Activated naive CD4-positive, alpha-beta T cell treated with anti-CD3 and anti-CD28 coated beads for 36 hours (primary cell): ENCODE measurements at regions of chr14 and their contacts with region 1.

Region 1: DNA sequence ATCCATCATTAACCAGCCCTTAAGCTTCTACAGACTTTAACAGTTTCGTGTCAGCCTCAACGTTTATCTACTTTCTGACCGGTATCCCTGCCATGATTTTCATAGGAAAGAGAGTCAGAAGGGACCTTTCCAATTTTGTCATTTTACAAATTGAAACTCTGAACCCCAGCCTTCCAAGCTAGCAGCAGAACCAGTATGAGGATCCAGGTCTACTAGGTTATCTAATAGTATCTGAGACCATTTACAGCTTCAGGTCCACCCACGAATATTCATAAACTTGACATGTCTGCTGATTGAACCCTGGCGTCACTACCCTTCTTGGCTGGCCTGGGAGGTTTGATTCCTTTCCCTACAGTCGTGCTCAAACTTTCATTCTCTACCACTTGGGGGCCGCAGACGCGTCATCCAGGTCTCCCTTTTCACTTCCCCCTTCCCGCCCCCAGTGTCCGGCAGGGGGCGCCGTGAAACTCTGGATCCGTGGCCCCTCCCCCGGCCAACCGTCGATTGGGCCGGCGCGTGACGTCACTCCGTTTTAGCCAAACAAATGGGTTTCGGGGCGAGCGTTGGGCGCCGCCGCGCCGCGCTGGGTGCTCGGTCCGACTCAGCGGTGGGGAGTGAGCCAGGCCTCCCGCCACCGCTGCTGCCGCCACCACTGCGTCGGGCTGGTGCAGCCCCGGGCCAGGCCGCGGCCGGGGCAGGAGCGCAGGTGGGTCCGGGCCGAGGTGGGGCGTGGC is at the start of gene FBXO34:
- DNase-seq: peak; percentile 99
- H3K4me3 Mint-ChIP-seq: peak within 1 kb of the TSS; percentile 86
- H3K27ac Mint-ChIP-seq: peak within 1 kb of the TSS; percentile 88
- H3K4me1 Mint-ChIP-seq: peaks cover 43% of the 10 kb centered on the region
- H3K27me3 Mint-ChIP-seq: no peaks in the 10 kb centered on the region
- total RNA-seq, gene FBXO34: 17.4 to 17.7 TPM

Region 2: GRCh38 chr14:54737132-54737711 is 533.8 kb before region 1 on chr14:
- CTCF ChIA-PET with region 1: no interaction called
- intact Hi-C with region 1: no loop called
- DNase-seq: peak; percentile 36
- H3K4me3 Mint-ChIP-seq: no peak overlapping the region
- H3K27ac Mint-ChIP-seq: no peak overlapping the region
- H3K4me1 Mint-ChIP-seq: peaks cover 31% of the 10 kb centered on the region
- H3K27me3 Mint-ChIP-seq: no peaks in the 10 kb centered on the region

Region 3: GRCh38 chr14:54881235-54881760 is 389.7 kb before region 1 on chr14:
- CTCF ChIA-PET with region 1: no interaction called
- intact Hi-C with region 1: loop called (anchors 5 kb)
- DNase-seq: peak; percentile 38
- H3K4me3 Mint-ChIP-seq: peak overlapping the region; percentile 78
- H3K27ac Mint-ChIP-seq: peak overlapping the region; percentile 96
- H3K4me1 Mint-ChIP-seq: peaks cover 34% of the 10 kb centered on the region
- H3K27me3 Mint-ChIP-seq: no peaks in the 10 kb centered on the region

Region 4: DNA sequence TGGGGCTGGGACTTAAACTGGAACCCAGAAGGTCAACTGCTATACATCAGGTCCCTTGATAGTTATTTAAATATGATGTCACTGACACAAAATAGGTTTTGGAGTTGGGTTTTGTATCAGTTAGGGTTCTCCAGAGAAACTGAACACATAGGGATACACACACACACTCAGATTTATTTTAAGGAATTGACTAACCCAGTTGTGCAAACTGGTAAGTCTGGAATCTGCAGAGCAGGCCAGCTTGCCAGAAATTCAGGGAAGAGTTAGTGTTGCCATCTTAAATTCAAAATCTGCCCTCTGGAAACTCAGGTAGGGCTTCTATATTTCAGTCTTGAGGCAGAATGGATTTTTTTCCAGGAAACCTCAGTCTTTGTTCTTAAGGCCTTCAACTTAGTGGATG is 182.6 kb before region 1 on chr14:
- CTCF ChIA-PET with region 1: no interaction called
- intact Hi-C with region 1: loop called (anchors 2 kb)
- DNase-seq: no peak
- H3K4me3 Mint-ChIP-seq: no peak overlapping the region
- H3K27ac Mint-ChIP-seq: no peak overlapping the region
- H3K4me1 Mint-ChIP-seq: no peaks in the 10 kb centered on the region
- H3K27me3 Mint-ChIP-seq: no peaks in the 10 kb centered on the region

Region 5: DNA sequence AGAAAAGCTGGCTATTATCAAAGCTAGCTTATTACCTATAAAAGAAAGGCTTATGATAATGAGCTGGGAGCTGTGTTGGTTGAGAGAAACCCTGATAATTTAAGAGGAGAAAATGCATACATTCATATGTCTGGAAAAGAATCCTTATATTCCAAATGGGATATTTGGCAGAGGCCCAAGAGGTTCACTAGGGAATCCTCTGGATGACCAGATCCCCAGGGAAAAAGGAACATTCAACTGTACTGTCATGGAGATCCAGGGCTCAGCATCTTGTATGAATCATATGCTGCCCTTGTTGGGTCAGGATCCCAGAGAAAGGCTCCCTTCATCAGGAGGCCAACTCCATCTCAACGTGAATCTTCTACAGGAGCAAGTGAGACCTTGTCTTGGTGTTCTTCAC is 16.4 kb before region 1 on chr14:
- CTCF ChIA-PET with region 1: interaction called, 11 read pairs
- intact Hi-C with region 1: no loop called
- DNase-seq: no peak
- H3K4me3 Mint-ChIP-seq: no peak overlapping the region
- H3K27ac Mint-ChIP-seq: no peak overlapping the region
- H3K4me1 Mint-ChIP-seq: peaks cover 2% of the 10 kb centered on the region
- H3K27me3 Mint-ChIP-seq: no peaks in the 10 kb centered on the region

Region 6: GRCh38 chr14:55294603-55295002 is 23.6 kb after region 1 on chr14:
- CTCF ChIA-PET with region 1: no interaction called
- intact Hi-C with region 1: no loop called
- DNase-seq: no peak
- H3K4me3 Mint-ChIP-seq: no peak overlapping the region
- H3K27ac Mint-ChIP-seq: no peak overlapping the region
- H3K4me1 Mint-ChIP-seq: peaks cover 42% of the 10 kb centered on the region
- H3K27me3 Mint-ChIP-seq: no peaks in the 10 kb centered on the region

Region 7: GRCh38 chr14:55333711-55334485 is 62.9 kb after region 1 on chr14:
- CTCF ChIA-PET with region 1: interaction called, 6 read pairs
- intact Hi-C with region 1: loop called (anchors 1 kb)
- DNase-seq: peak; percentile 21
- H3K4me3 Mint-ChIP-seq: peak overlapping the region; percentile 10
- H3K27ac Mint-ChIP-seq: peak overlapping the region; percentile 78
- H3K4me1 Mint-ChIP-seq: peaks cover 82% of the 10 kb centered on the region
- H3K27me3 Mint-ChIP-seq: no peaks in the 10 kb centered on the region

Region 8: GRCh38 chr14:55373784-55374705 is 103.0 kb after region 1 on chr14:
- CTCF ChIA-PET with region 1: interaction called, 8 read pairs
- intact Hi-C with region 1: loop called (anchors 1 kb)
- DNase-seq: peak; percentile 58
- H3K4me3 Mint-ChIP-seq: peak overlapping the region; percentile 45
- H3K27ac Mint-ChIP-seq: peak overlapping the region; percentile 97
- H3K4me1 Mint-ChIP-seq: peaks cover 43% of the 10 kb centered on the region
- H3K27me3 Mint-ChIP-seq: no peaks in the 10 kb centered on the region

Region 9: DNA sequence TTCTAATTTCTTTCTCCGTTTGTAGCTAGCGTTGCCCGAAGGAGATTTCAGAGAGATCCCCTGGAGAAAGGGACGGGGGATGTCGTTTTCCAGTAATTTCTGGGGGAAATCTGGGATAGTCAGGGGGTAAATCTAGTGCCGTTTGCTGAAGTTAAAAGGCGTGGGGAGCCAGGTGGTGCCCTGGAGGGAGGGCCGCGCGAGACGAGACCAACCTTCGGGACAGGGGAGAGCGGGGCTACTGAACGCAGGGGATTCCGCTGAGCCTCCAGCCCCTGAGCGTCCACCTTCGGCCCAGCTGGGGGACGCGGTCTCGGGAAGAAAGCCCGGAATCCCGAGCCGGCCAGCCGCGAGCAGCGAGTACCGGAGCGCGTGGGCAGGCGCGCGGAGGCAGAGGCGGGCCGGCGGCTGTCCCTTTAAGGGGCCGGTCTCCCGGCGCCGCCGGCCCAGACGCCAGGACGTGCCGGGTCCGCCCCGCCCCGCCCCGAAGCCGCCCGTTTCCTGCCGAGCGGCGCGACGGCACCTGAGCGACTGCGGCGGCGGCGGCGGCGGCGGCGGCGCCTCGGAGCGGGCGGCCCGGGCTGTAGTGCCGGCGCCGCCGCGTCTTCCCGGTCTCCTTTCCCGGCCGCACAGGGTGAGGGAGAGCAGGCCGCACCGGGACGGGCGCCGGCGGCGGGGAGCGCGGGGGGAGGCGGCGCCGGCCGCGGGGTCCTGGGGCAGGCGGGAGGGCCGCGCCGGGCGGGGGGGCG is 308.9 kb after region 1 on chr14 and contains the start of gene KTN1:
- CTCF ChIA-PET with region 1: no interaction called
- intact Hi-C with region 1: loop called (anchors 5 kb)
- DNase-seq: peak; percentile 84
- H3K4me3 Mint-ChIP-seq: peak within 1 kb of the TSS; percentile 94
- H3K27ac Mint-ChIP-seq: peak within 1 kb of the TSS; percentile 84
- H3K4me1 Mint-ChIP-seq: peaks cover 30% of the 10 kb centered on the region
- H3K27me3 Mint-ChIP-seq: no peaks in the 10 kb centered on the region
- total RNA-seq, gene KTN1: 90.0 to 94.1 TPM